ENCODE measurements at regions of chr5 and their contacts with region 1.

Region 1: DNA sequence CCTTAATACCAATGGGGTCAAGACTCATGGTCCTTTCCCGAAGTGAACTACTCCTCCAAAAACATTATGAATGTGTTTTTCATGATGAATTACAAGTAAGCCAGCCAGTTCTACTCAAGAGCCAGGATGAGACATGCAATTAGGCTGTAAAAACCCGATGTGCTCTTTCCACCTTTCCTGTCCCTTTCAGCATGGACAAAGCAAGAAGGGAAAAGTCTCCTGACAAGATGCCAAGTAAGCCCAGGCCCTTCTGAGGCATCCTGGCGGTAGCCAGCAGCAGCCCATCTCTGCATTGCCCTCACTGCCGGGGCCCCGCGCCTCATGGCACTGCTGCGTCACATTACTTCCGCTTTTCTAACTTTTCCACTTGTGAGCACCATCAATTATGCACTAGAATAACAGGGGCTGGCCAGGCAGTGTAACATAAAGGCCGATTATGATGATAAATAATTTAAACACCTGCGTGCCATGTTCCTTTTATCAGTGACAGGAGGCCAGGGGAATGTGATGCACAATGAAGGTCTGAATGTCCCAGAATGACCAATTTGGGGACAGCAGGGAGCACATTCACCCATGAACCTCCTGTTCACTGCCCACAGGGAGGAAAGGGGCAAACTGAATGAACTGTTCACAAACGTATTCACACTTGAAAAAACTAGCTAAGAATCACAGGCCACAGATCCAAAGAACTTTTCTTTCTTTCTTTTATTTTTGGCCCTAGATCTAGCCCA is 37.4 kb downstream of the EFNA5 start:
- DNase-seq: no peak
- ATAC-seq: no peak
- H3K4me3 ChIP-seq: no peak overlapping the region
- H3K27ac ChIP-seq: no peak overlapping the region
- H3K4me1 ChIP-seq: no peaks in the 10 kb centered on the region
- H3K27me3 ChIP-seq: no peaks in the 10 kb centered on the region
- CTCF ChIP-seq: no peak

Region 2: GRCh38 chr5:107314330-107314729 is 319.0 kb before region 1 on chr5:
- CTCF ChIA-PET with region 1: no interaction called
- POLR2A ChIA-PET with region 1: no interaction called
- in situ Hi-C with region 1: no loop called
- intact Hi-C with region 1: no loop called
- DNase-seq: no peak
- ATAC-seq: no peak
- H3K4me3 ChIP-seq: no peak overlapping the region
- H3K27ac ChIP-seq: no peak overlapping the region
- H3K4me1 ChIP-seq: no peaks in the 10 kb centered on the region
- H3K27me3 ChIP-seq: no peaks in the 10 kb centered on the region
- CTCF ChIP-seq: no peak

Region 3: DNA sequence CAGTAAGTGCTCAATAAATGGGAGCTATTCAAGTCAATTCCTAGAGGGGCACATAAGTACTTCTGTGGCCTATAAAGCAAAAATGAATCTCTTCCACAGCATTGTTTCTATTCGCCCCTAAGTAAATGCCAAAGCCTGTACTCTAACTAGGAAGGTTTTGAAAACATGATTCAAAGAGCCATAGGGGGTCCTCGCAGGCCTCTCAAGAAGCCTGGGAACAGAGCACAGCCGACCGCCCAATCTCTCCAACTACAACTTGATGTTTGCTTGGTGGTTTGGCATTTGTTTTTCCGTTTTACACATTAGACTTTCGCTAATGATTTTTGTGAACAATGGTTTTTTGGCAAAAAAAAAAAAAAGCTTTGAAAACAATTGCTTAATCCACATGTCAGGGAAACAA is 18.0 kb after region 1 on chr5:
- CTCF ChIA-PET with region 1: no interaction called
- POLR2A ChIA-PET with region 1: interaction called, 10 read pairs
- in situ Hi-C with region 1: no loop called
- intact Hi-C with region 1: no loop called
- DNase-seq: no peak
- ATAC-seq: no peak
- H3K4me3 ChIP-seq: no peak overlapping the region
- H3K27ac ChIP-seq: no peak overlapping the region
- H3K4me1 ChIP-seq: peaks cover 7% of the 10 kb centered on the region
- H3K27me3 ChIP-seq: no peaks in the 10 kb centered on the region
- CTCF ChIP-seq: no peak

Measured in Panc1 (cell line).